ENCODE measurements at regions of chr10 and their contacts with region 1.

Region 1: GRCh38 chr10:69375307-69376151 is 41.2 kb downstream of the TACR2 start:
- DNase-seq: peak; percentile 48 to 81 (median 79)
- ATAC-seq: peak; percentile 67 to 85
- H3K4me3 ChIP-seq: no peak overlapping the region
- H3K27ac ChIP-seq: peak overlapping the region; percentile 37
- H3K4me1 ChIP-seq: peaks cover 18% of the 10 kb centered on the region
- H3K27me3 ChIP-seq: no peaks in the 10 kb centered on the region

Region 2: DNA sequence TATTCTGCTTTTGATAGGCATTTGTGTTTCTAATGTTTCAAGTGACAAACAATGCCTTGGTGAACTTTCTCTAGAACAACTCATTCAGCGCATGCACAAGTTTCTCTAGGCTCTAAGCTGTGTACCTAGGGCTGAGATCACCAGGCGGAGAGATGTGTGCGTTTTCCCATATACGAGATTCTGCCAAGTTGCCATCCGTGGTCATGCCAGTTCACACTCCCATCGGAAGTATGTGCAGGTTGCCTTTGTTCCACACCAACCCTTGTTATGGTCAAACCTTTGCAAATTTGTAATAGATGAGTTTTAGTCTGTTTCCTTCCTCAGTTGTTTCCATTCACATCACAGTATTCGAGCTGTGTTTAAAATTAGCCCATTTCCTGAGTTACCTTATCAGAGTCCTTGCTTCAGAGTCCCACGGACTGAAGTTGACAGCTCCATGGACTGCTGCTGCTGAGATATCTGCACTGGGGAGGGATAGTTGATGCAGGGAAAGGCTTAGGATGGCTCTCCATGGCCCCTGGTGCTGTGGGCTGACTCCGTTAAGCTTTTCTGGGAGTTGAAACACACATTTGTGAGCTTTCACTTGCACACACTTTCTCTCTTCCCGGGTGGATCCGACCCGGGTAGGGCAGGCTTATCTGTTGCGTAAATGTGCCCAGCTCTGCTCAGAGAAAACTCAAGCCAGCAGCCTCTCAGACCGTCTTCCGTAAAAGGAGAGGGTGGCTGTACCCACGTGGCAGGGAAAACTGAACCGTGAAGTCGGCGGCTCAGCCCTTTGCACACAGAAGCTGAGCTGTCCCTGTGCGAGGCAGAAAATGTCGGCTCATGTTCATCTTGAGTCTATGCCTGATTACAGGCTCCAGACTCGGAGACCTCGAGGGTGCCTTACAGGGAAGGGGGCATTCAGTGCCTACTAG is 47.8 kb before region 1 on chr10:
- intact Hi-C with region 1: loop called in 3 of 4 experiments (anchors 5 to 10 kb)
- DNase-seq: peak; percentile 79 to 88 (median 86)
- ATAC-seq: peak; percentile 90 to 91
- H3K4me3 ChIP-seq: peak overlapping the region; percentile 28
- H3K27ac ChIP-seq: peak overlapping the region; percentile 97
- H3K4me1 ChIP-seq: peaks cover 20% of the 10 kb centered on the region
- H3K27me3 ChIP-seq: no peaks in the 10 kb centered on the region

Region 3: GRCh38 chr10:69333205-69333604 is 42.3 kb before region 1 on chr10:
- intact Hi-C with region 1: loop called in 3 of 4 experiments (anchors 5 to 10 kb)
- DNase-seq: peak in 1 of 3 donors; percentile 67
- ATAC-seq: peak; percentile 34 to 58
- H3K4me3 ChIP-seq: no peak overlapping the region
- H3K27ac ChIP-seq: peak overlapping the region; percentile 97
- H3K4me1 ChIP-seq: peaks cover 48% of the 10 kb centered on the region
- H3K27me3 ChIP-seq: no peaks in the 10 kb centered on the region

Region 4: GRCh38 chr10:69348816-69349541 is 26.6 kb before region 1 on chr10:
- intact Hi-C with region 1: no loop called
- DNase-seq: peak; percentile 70 to 88 (median 74)
- ATAC-seq: peak; percentile 70 to 73
- H3K4me3 ChIP-seq: no peak overlapping the region
- H3K27ac ChIP-seq: peak overlapping the region; percentile 75
- H3K4me1 ChIP-seq: peaks cover 28% of the 10 kb centered on the region
- H3K27me3 ChIP-seq: no peaks in the 10 kb centered on the region

Measured in right cardiac atrium (tissue), 5 donors.